ENCODE measurements at regions of chr10 and their contacts with region 1.

Region 1: GRCh38 chr10:57338823-57339558 is 928.7 kb downstream of the IPMK start:
- DNase-seq: no peak
- H3K4me3 ChIP-seq: no peak overlapping the region
- H3K27ac ChIP-seq: no peak overlapping the region
- H3K4me1 ChIP-seq: no peaks in the 10 kb centered on the region
- H3K27me3 ChIP-seq: no peaks in the 10 kb centered on the region
- CTCF ChIP-seq: peak in 3 of 4 experiments; percentile 19 to 66 (median 50)
- EP300 ChIP-seq: no peak
- POLR2A ChIP-seq: no peak

Region 2: GRCh38 chr10:57657164-57657765 is 318.3 kb after region 1 on chr10:
- intact Hi-C with region 1: loop called (anchors 5 kb)
- DNase-seq: no peak
- H3K4me3 ChIP-seq: no peak overlapping the region
- H3K27ac ChIP-seq: no peak overlapping the region
- H3K4me1 ChIP-seq: no peaks in the 10 kb centered on the region
- H3K27me3 ChIP-seq: no peaks in the 10 kb centered on the region
- CTCF ChIP-seq: peak in 3 of 4 experiments; percentile 26 to 72 (median 49)
- EP300 ChIP-seq: no peak
- POLR2A ChIP-seq: no peak

Region 3: DNA sequence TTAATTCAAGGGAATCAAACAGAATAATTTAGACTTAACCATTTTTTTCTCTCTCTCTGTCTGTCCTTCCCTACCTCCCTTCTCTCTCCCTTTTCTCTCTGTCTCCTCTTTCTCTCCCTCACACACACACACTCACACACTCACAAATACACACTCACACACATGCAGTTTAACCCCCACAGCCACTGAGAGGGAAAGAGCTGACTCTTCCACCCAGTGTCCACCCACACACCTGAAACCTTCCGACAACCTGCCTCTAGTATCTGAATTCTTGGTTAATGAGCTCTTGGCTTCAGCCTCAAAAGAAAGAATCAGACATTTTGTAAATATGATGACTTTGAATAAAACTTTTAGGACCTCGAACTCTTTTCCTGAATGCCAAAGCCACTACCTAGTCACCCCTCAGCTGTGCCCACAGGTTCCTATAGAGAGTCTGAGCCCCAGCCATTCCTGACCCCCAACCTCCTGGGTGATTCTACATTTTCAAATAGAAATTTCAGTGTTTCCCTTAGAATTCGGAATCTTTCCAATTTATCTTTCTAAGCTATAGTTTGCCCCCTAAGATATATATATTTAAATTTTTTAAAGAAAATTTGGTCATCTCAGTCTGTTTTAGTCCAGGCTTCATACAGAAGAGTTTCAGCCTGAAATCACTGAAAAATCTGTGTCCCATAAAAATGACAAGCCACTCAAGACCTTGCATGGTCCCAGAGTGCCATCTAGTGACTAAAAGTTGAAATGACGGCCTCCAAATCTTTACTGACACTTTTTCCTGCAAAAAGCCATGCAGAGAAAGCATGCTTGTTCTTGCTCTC is 725.9 kb after region 1 on chr10:
- intact Hi-C with region 1: loop called (anchors 10 kb)
- DNase-seq: no peak
- H3K4me3 ChIP-seq: no peak overlapping the region
- H3K27ac ChIP-seq: no peak overlapping the region
- H3K4me1 ChIP-seq: no peaks in the 10 kb centered on the region
- H3K27me3 ChIP-seq: no peaks in the 10 kb centered on the region
- CTCF ChIP-seq: peak in 2 of 4 experiments; percentile 26 to 51
- EP300 ChIP-seq: no peak
- POLR2A ChIP-seq: no peak